Right ventricle myocardium superior (tissue), 1 donor: ENCODE measurements at regions of chr1 and their contacts with region 1.

Region 1: DNA sequence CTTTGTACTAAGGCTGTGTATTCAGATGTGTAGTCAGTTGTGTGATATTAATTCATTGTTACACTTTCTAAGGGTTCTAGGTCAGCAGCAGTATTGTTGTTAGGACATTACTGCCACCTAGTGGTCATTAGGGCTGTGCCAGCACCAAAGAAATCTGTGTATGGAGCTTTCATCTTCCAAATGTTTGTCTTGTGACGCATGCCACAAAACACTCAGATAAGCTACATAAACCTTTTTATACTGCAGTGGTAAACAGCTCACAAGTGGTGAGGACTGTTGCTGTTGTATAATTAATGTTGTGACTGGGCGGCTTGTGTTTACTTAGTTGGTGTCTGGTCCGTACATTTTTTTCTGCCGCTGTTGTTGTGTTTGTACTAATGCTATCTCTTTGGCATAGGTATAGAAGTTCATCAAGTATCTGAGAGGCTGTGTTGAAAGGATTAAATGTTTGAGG is 51.7 kb downstream of the S1PR1 start:
- DNase-seq: no peak
- ATAC-seq: peak; percentile 90

Region 2: DNA sequence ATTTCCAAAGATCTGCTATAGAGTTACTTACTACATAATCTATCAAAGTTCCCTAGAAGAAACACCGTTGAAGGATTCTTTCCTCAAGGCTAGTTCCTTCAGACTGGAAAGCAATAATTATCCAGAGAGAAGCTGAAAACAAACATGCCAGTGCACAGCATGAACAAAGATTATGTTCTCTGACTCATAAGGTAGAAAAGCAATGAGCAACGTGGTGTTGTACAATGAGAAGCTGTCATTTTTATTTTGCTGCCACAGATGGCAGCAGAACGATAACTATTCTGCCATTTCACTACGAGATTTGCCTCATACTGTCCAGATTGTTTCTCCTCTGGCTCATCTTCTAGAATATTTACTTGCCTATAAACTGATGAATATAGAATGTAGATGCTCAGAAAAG is 404.6 kb before region 1 on chr1:
- intact Hi-C with region 1: no loop called
- DNase-seq: no peak
- ATAC-seq: no peak

Region 3: DNA sequence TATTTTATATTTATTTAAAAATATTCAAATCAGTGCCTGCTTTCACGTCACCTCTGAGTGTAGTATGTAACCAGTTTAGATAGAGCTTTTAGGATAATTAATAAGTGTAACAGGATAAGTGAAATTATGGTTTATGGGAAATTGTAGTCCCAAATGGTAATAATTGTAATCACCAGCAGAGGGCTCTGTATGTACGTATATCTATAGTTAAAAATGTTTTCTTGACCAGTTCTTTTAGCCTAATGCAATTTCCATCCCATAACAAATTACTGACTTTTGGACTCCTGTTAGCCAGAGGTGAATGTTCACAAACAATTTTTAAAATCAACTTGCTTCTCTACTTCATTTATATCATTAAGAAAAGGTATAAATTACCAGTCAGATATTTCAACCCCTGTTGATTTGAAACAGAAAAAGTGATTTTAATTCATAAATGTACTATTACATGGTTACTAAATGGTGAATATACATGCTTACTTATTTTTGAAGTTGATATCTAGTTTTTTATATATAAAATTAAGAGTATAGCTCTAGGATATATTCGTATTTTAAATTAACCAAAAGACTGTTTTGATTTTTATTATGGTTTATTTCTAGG is 367.3 kb before region 1 on chr1:
- intact Hi-C with region 1: loop called (anchors 5 kb)
- DNase-seq: no peak
- ATAC-seq: peak; percentile 43

Region 4: GRCh38 chr1:101136739-101137138 is 151.8 kb before region 1 on chr1:
- intact Hi-C with region 1: loop called (anchors 10 kb)
- DNase-seq: no peak
- ATAC-seq: peak; percentile 73

Region 5: GRCh38 chr1:101190441-101190840 is 98.1 kb before region 1 on chr1:
- intact Hi-C with region 1: no loop called
- DNase-seq: no peak
- ATAC-seq: peak; percentile 63